B cell (primary cell): ENCODE measurements at regions of chr19 and their contacts with region 1.

Region 1: GRCh38 chr19:35330475-35330874 is 1.5 kb downstream of the CD22 start:
- DNase-seq: peak; percentile 94
- ATAC-seq: peak; percentile 84
- H3K4me3 ChIP-seq: peak overlapping the region; percentile 83 to 100 (median 89)
- H3K4me3 Mint-ChIP-seq: peak overlapping the region; percentile 93
- H3K27ac ChIP-seq: peak overlapping the region; percentile 79 to 90
- H3K27ac Mint-ChIP-seq: peak overlapping the region; percentile 96
- H3K4me1 ChIP-seq: peaks cover 68 to 83% of the 10 kb centered on the region in 2 donors
- H3K4me1 Mint-ChIP-seq: peaks cover 75% of the 10 kb centered on the region
- H3K27me3 ChIP-seq: no peaks in the 10 kb centered on the region
- H3K27me3 Mint-ChIP-seq: no peaks in the 10 kb centered on the region
- CTCF ChIP-seq: no peak

Region 2: GRCh38 chr19:35269421-35270117 is 60.9 kb before region 1 on chr19:
- CTCF ChIA-PET with region 1: interaction called, 4 read pairs
- POLR2A ChIA-PET with region 1: interaction called, 3 read pairs
- intact Hi-C with region 1: loop called (anchors 1 kb)
- DNase-seq: peak; percentile 92
- ATAC-seq: peak; percentile 71
- H3K4me3 ChIP-seq: peak overlapping the region in 4 of 5 experiments; percentile 24 to 62 (median 54)
- H3K4me3 Mint-ChIP-seq: peak overlapping the region; percentile 84
- H3K27ac ChIP-seq: no peak overlapping the region
- H3K27ac Mint-ChIP-seq: peak overlapping the region; percentile 87
- H3K4me1 ChIP-seq: peaks cover 39 to 57% of the 10 kb centered on the region in 2 donors
- H3K4me1 Mint-ChIP-seq: peaks cover 62% of the 10 kb centered on the region
- H3K27me3 ChIP-seq: no peaks in the 10 kb centered on the region
- H3K27me3 Mint-ChIP-seq: no peaks in the 10 kb centered on the region
- CTCF ChIP-seq: peak; percentile 77

Region 3: DNA sequence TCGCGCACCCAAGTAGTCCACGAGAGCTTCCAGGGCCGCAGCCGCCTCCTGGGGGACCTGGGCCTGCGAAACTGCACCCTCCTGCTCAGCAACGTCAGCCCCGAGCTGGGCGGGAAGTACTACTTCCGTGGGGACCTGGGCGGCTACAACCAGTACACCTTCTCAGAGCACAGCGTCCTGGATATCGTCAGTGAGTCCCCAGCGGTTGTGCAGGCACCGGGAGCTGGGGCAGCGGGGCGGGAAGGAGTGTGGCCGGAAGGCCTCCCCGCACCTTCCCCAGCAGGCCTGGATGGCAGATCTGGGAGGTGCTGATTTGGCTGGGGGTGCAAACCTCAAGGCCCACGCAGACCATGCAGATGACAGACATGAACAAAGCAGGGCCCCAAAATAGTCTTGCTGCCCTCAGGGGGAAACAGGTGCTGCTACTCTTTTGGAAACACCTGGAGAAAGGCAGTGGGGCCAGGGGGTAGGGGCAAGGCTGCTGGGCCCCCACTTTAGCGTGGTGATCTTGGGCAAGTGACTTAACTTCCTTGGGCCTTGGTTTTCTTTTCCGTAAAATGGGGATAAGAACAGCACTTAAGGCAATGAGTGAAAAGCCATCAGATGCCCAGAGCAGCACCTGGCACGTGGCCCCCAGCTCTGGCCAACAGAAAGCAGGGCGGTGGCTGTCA is 34.5 kb before region 1 on chr19:
- CTCF ChIA-PET with region 1: no interaction called
- POLR2A ChIA-PET with region 1: interaction called, 7 read pairs
- intact Hi-C with region 1: loop called (anchors 5 kb)
- DNase-seq: peak; percentile 76
- ATAC-seq: peak; percentile 73
- H3K4me3 ChIP-seq: peak overlapping the region in 2 of 5 experiments; percentile 17 to 23
- H3K4me3 Mint-ChIP-seq: peak overlapping the region; percentile 66
- H3K27ac ChIP-seq: peak overlapping the region; percentile 57 to 58
- H3K27ac Mint-ChIP-seq: peak overlapping the region; percentile 74
- H3K4me1 ChIP-seq: peaks cover 27 to 52% of the 10 kb centered on the region in 2 donors
- H3K4me1 Mint-ChIP-seq: peaks cover 23% of the 10 kb centered on the region
- H3K27me3 ChIP-seq: no peaks in the 10 kb centered on the region
- H3K27me3 Mint-ChIP-seq: no peaks in the 10 kb centered on the region
- CTCF ChIP-seq: no peak

Region 4: DNA sequence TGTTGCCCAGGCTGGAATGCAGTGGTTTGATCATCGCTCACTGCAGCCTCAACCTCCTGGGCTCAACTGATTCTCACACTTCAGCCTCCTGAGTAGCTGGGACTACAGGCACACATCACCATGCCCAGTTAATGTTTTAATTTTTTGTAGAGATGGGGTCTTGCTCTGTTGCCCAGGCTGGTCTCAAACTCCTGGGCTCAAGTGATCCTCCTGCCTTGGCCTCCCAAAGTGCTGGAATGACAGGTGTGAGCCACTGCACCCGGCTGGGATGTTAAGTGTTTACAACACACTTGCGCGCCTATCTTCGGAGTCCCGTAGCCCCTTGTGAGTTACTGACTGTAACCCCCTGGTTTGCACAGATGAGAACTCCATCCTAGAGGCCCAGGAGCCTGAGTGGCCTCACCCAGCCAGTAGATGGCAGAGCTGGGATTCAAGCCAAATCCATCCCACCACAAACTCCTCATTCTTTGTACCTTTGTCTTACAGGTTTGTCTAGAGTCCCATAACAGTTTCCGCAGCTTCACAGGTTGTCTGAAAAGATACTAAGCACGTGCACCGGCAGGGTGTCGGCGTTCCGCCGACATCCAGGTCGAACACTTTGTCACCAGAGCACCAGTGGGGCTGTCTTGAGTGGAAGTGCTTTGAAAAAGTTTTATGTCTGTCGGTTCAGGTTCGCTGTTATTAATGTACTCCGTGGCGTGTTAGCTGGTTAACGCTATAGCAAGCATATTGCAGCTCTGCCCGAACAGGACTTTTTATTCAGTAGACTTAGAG is 23.8 kb before region 1 on chr19:
- CTCF ChIA-PET with region 1: interaction called, 35 read pairs
- POLR2A ChIA-PET with region 1: no interaction called
- intact Hi-C with region 1: no loop called
- DNase-seq: peak; percentile 58
- ATAC-seq: peak; percentile 62
- H3K4me3 ChIP-seq: no peak overlapping the region
- H3K4me3 Mint-ChIP-seq: peak overlapping the region; percentile 29
- H3K27ac ChIP-seq: no peak overlapping the region
- H3K27ac Mint-ChIP-seq: peak overlapping the region; percentile 65
- H3K4me1 ChIP-seq: peaks cover 21 to 42% of the 10 kb centered on the region in 2 donors
- H3K4me1 Mint-ChIP-seq: peaks cover 45% of the 10 kb centered on the region
- H3K27me3 ChIP-seq: no peaks in the 10 kb centered on the region
- H3K27me3 Mint-ChIP-seq: no peaks in the 10 kb centered on the region
- CTCF ChIP-seq: peak; percentile 33

Region 5: GRCh38 chr19:35318650-35319448 is 11.6 kb before region 1 on chr19:
- CTCF ChIA-PET with region 1: interaction called, 26 read pairs
- POLR2A ChIA-PET with region 1: interaction called, 106 read pairs
- intact Hi-C with region 1: loop called (anchors 1 kb)
- DNase-seq: peak; percentile 65
- ATAC-seq: peak; percentile 25
- H3K4me3 ChIP-seq: peak overlapping the region in 1 of 5 experiments; percentile 53
- H3K4me3 Mint-ChIP-seq: peak overlapping the region; percentile 75
- H3K27ac ChIP-seq: peak overlapping the region; percentile 94 to 97
- H3K27ac Mint-ChIP-seq: peak overlapping the region; percentile 91
- H3K4me1 ChIP-seq: peaks cover 81 to 97% of the 10 kb centered on the region in 2 donors
- H3K4me1 Mint-ChIP-seq: peaks cover 85% of the 10 kb centered on the region
- H3K27me3 ChIP-seq: no peaks in the 10 kb centered on the region
- H3K27me3 Mint-ChIP-seq: no peaks in the 10 kb centered on the region
- CTCF ChIP-seq: no peak

Region 6: DNA sequence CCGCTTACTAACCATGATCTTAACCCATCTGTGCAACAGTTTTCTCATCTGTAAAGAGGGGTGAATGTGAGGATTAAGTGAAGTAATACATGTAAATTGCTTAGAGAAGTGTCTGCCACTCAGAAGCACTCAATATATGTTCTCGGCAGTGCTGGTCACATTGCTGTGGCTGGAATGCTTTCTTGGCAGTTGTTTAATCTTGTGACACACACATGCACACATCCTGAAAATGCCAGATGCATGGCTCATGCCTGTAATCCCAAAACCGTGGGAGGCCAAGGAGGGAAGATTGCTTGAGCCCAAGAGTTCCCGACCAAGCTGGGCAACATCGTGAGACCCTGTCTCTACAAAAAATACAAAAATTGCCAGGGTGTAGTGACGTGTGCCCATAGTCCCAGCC is 187.8 kb after region 1 on chr19:
- CTCF ChIA-PET with region 1: no interaction called
- POLR2A ChIA-PET with region 1: no interaction called
- intact Hi-C with region 1: no loop called
- DNase-seq: no peak
- ATAC-seq: no peak
- H3K4me3 ChIP-seq: no peak overlapping the region
- H3K4me3 Mint-ChIP-seq: no peak overlapping the region
- H3K27ac ChIP-seq: no peak overlapping the region
- H3K27ac Mint-ChIP-seq: no peak overlapping the region
- H3K4me1 ChIP-seq: no peaks in the 10 kb centered on the region
- H3K4me1 Mint-ChIP-seq: no peaks in the 10 kb centered on the region
- H3K27me3 ChIP-seq: peaks cover 0 to 9% (median 2%) of the 10 kb centered on the region in 4 experiments
- H3K27me3 Mint-ChIP-seq: peaks cover 33% of the 10 kb centered on the region
- CTCF ChIP-seq: no peak